ENCODE measurements at regions of chr1 and their contacts with region 1.

Region 1: GRCh38 chr1:8727809-8728213 is 89.6 kb downstream of the RERE start:
- DNase-seq: no peak

Region 2: DNA sequence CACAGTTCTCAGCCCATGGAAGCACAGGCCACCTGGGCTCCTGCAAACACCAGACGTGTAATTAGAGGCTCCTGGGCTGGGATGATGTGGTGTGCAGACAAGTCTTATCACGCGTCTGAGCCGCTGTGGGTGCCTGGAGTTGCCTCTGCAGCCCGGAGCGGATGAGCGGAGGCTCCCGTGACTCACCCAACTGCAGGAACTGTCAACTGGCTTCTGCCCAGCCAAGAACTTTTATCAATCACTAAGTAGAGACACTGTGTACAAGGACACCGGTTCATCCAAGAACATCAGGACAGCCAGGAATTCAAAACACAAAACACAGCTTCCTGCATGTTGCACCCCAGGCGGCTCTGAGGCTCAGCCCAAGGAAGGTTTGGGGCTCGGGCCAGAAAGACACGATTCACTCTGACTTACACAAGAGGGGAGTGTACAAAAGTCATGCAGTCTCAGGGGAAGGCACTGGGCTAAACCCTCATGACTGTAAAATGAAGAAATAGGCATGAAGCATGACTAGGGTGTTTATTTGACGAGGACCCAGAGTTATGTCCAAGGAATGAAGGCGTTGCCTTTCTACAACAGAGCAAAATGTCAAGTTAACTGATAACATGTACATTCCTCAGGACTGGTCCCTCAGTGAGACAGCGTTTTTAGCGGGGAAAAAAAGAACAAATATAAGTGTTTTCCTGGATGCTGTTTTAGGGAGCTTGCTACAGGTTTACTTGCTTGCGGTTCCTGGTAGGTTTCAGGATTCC is 722.8 kb before region 1 on chr1:
- intact Hi-C with region 1: loop called (anchors 10 kb)
- DNase-seq: no peak

Region 3: DNA sequence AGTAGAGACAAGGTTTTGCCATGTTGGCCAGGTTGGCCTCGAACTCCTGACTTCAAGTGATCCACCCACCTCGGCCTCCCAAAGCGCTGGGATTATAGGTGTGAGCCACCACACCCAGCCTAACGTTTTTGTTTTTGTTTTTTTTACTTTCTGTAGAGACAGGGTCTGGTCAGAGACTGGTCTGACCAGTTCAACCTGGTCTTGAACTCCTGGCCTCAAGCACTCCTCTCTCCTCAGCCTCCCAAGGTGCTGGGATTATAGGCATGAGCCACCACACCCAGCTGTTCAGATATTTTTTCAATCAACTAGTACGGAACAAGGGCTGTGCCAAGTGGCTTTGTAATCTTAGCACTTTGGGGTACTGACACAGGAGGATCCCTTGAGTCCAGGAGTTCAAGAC is 119.9 kb before region 1 on chr1:
- intact Hi-C with region 1: no loop called
- DNase-seq: no peak

Region 4: GRCh38 chr1:8822373-8823294 is 94.8 kb after region 1 on chr1:
- intact Hi-C with region 1: no loop called
- DNase-seq: no peak

Region 5: GRCh38 chr1:8871539-8871935 is 143.7 kb after region 1 on chr1:
- intact Hi-C with region 1: no loop called
- DNase-seq: no peak

Region 6: GRCh38 chr1:8925406-8925805 is 197.6 kb after region 1 on chr1:
- intact Hi-C with region 1: no loop called
- DNase-seq: no peak

Measured in cardiac septum (tissue), 1 donor.